ENCODE measurements at regions of chr3 and their contacts with region 1.

Region 1: GRCh38 chr3:128584412-128585020 is 66.1 kb downstream of the RPN1 start:
- DNase-seq: no peak
- H3K4me3 ChIP-seq: no peak overlapping the region
- H3K27me3 ChIP-seq: peaks cover 2% of the 10 kb centered on the region; the same call in 1 of the 2 replicates
- CTCF ChIP-seq: peak; percentile 85

Region 2: DNA sequence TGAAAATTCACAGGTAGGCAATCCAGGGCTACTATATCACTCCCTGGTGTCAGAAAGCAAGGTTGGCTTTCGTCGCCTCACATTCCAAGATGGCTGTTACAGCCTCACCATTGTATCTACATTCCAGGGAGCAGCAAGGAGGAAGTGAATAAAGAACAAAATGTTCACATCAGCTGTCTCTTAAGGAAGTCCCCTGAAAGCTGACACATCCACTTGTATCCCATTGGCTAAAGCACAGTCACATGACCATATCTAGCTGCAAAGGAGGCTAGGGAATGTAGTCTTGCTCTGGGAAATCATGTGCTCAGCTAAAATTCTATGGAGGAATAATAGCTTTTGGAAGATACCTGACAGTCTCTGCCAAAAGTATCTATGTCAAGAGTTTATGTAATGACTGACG is 78.7 kb before region 1 on chr3:
- CTCF ChIA-PET with region 1: interaction called, 12 read pairs
- POLR2A ChIA-PET with region 1: no interaction called
- DNase-seq: no peak
- H3K4me3 ChIP-seq: no peak overlapping the region
- H3K27me3 ChIP-seq: no peaks in the 10 kb centered on the region
- CTCF ChIP-seq: no peak

Region 3: DNA sequence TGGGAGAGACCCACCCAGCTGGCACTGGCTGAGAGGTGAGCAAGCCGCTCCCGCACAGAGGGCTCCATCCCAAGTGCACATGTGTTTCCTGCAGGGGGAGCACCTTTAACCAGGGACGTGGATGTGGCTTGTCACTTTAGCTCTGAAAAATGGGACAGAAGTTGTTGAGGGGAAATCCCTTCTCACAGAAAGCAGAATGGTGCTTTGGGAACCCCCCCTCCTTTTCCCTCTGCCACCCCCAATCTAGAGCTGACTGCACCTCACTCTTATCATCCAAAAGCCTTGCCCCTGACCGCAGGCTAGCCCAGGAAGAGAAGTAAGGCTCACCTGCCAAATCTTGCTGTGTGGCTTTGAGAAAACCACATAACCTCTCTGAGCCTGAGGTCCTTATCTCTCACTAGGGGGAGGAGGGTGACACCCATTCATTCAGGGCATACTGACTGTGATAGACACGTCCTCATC is 11.8 kb before region 1 on chr3:
- CTCF ChIA-PET with region 1: interaction called, 18 read pairs
- POLR2A ChIA-PET with region 1: no interaction called
- DNase-seq: no peak
- H3K4me3 ChIP-seq: no peak overlapping the region
- H3K27me3 ChIP-seq: peaks cover 8% of the 10 kb centered on the region
- CTCF ChIP-seq: peak; percentile 39